Activated CD4-positive, alpha-beta T cell treated with anti-CD3 and anti-CD28 coated beads for 36 hours (primary cell): ENCODE measurements at regions of chr1 and their contacts with region 1.

Region 1: DNA sequence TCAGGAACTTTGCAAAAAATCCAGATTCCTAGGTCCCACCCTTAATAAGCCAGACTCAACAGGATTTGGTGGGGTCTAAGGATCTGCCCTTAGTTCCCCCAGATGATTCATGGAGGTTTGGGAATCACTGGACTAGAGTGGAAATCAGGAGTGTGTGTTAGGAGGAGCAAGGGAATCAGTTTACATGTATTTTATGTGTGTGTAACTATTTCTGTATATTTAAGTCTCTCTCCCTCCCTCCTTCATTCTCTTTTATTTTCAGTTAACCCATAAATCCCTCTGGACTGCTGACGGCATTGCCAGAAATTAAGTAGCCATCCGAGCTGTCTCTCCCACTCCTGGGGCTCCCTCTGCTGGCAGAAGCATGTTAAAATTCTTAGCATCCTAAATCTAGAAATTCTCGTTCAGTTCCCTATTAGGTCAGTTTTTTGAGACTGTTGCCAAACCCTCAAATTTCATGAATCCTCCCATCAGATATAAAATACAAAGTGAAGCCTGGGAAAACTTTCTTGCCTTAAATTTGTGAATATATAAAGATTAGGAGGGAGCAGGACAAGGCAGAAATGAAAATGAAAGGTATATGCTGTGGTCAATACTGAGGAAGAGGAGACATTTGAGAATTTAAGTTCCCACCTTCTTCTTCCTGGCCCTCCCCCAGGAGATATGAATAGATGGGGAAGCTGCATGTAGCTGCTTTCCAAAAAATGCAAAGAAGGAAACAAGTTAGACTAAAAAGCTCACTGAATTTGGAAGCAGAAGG is 11.7 kb upstream of the HSD11B1 start:
- DNase-seq: peak; percentile 88
- ATAC-seq: peak; percentile 68
- H3K4me3 Mint-ChIP-seq: no peak overlapping the region
- H3K27ac Mint-ChIP-seq: peak overlapping the region; percentile 43
- H3K4me1 Mint-ChIP-seq: peaks cover 40% of the 10 kb centered on the region
- H3K27me3 Mint-ChIP-seq: no peaks in the 10 kb centered on the region

Region 2: DNA sequence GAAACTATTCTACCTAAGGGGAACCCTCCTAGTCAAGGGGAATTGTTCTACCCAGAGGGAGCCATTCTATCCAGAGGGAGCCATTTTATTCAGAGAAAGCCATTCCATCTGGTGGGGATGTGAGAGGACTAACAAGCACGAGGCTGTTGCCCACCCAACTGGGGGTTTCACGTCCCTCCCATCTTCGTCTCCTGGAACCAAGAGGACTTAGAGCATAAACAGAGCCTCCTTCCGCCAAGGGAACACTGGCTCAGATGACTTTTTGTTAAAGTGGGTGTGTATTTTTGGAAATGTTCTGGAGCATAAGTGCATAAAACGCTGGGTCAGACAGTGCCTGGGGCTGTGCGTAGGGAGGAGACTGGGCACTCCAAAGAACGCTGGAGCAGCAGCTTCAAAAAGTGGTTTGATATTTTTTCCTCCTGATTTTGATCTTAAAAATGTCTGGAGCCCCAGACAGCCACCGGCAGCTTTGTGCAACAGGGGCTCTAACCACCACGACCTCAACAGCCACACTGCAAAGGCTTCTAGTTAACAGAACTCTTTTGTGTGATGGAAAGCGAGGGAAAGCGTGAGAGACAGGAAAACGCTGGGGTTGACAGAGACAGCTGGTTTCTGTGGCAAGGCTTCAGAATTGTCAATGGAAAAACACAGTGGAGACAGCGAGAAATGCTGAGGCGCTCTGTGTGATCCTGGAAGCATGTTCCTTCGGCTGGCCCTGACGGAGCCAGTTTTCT is 473.0 kb before region 1 on chr1:
- CTCF ChIA-PET with region 1: no interaction called
- POLR2A ChIA-PET with region 1: no interaction called
- intact Hi-C with region 1: no loop called
- DNase-seq: no peak
- ATAC-seq: no peak
- H3K4me3 Mint-ChIP-seq: no peak overlapping the region
- H3K27ac Mint-ChIP-seq: no peak overlapping the region
- H3K4me1 Mint-ChIP-seq: peaks cover 2% of the 10 kb centered on the region
- H3K27me3 Mint-ChIP-seq: peaks cover 20% of the 10 kb centered on the region

Region 3: GRCh38 chr1:209389258-209389657 is 303.7 kb before region 1 on chr1:
- CTCF ChIA-PET with region 1: no interaction called
- POLR2A ChIA-PET with region 1: no interaction called
- intact Hi-C with region 1: no loop called
- DNase-seq: no peak
- ATAC-seq: peak; percentile 61
- H3K4me3 Mint-ChIP-seq: no peak overlapping the region
- H3K27ac Mint-ChIP-seq: no peak overlapping the region
- H3K4me1 Mint-ChIP-seq: no peaks in the 10 kb centered on the region
- H3K27me3 Mint-ChIP-seq: peaks cover 4% of the 10 kb centered on the region

Region 4: DNA sequence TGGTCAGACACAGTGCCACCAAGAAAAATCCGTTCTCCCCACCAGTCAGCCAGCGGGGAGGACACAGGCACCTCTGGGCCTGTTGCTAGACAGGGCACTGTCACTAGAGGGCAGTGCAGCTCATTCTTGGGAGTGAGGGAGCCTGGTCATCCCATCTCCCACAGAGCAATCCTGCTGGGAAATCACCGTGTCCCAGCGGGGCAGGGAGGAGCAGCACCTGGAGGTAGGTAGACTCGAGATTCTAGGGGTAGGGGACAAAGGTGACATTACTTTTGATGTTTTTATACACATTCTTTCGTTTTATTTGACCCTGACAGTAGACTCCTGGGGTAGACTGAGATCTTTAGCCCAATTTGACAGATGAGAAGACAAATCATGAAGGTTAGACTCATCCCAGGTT is 116.1 kb before region 1 on chr1:
- CTCF ChIA-PET with region 1: interaction called, 12 read pairs
- POLR2A ChIA-PET with region 1: no interaction called
- intact Hi-C with region 1: loop called (anchors 1 to 2 kb)
- DNase-seq: peak; percentile 84
- ATAC-seq: peak; percentile 98
- H3K4me3 Mint-ChIP-seq: no peak overlapping the region
- H3K27ac Mint-ChIP-seq: no peak overlapping the region
- H3K4me1 Mint-ChIP-seq: no peaks in the 10 kb centered on the region
- H3K27me3 Mint-ChIP-seq: peaks cover 7% of the 10 kb centered on the region

Region 5: GRCh38 chr1:209627732-209628196 is 65.2 kb before region 1 on chr1:
- CTCF ChIA-PET with region 1: interaction called, 4 read pairs
- POLR2A ChIA-PET with region 1: no interaction called
- intact Hi-C with region 1: loop called (anchors 1 to 2 kb)
- DNase-seq: peak; percentile 89
- ATAC-seq: peak; percentile 91
- H3K4me3 Mint-ChIP-seq: no peak overlapping the region
- H3K27ac Mint-ChIP-seq: no peak overlapping the region
- H3K4me1 Mint-ChIP-seq: peaks cover 8% of the 10 kb centered on the region
- H3K27me3 Mint-ChIP-seq: no peaks in the 10 kb centered on the region

Region 6: DNA sequence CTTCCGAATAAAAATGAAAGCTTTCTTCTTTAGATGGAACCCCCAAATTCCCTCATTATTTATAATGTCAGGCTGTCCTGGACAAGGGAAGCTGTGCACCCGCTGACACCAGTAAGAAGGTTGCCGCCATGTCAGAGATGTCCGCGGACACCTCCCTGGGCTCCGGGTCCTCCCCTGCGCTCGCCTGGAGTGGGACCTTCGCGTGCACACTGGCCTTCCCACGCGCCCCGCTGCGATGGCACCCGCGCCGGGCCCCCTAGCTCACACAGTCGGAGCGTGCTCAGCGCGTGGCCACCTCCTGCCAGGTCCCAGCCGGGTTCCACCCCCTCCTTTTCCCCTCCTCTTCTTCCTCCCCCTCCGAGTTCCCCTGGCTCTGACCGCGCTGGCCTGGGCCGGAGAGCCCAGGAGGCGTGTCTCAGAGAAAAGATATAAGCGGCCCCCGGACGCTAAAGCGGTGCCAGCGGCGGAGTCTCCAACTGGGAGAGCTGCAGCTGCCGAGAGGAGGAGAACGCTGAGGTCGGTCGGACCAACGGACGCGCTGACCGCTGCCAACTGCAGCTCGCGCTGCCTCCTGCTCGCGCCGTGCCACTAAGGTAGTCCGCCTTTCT is 17.9 kb before region 1 on chr1 and contains the start of gene G0S2:
- CTCF ChIA-PET with region 1: interaction called, 9 read pairs
- POLR2A ChIA-PET with region 1: no interaction called
- intact Hi-C with region 1: loop called in 1 of 2 experiments (anchors 2 kb)
- DNase-seq: peak; percentile 70
- ATAC-seq: peak; percentile 31
- H3K4me3 Mint-ChIP-seq: peak within 1 kb of the TSS; percentile 71
- H3K27ac Mint-ChIP-seq: peak within 1 kb of the TSS; percentile 84
- H3K4me1 Mint-ChIP-seq: peaks cover 56% of the 10 kb centered on the region
- H3K27me3 Mint-ChIP-seq: peaks cover 38% of the 10 kb centered on the region
- total RNA-seq, gene G0S2: 21.9 to 22.8 TPM